ENCODE measurements at regions of chr18 and their contacts with region 1.

Region 1: GRCh38 chr18:47100214-47100831 is 50.0 kb downstream of the HDHD2 start:
- DNase-seq: peak; percentile 18 to 23
- ATAC-seq: peak in 7 of 8 donors; percentile 30 to 74 (median 69)
- H3K4me3 ChIP-seq: no peak overlapping the region
- H3K27ac ChIP-seq: no peak overlapping the region
- H3K4me1 ChIP-seq: peaks cover 0 to 5% (median 0%) of the 10 kb centered on the region in 9 donors
- H3K27me3 ChIP-seq: no peaks in the 10 kb centered on the region
- CTCF ChIP-seq: peak; percentile 57 to 85 (median 73)

Region 2: GRCh38 chr18:47204908-47205522 is 104.7 kb after region 1 on chr18:
- intact Hi-C with region 1: loop called (anchors 1 to 5 kb)
- DNase-seq: peak in 1 of 2 donors; percentile 15
- ATAC-seq: peak in 1 of 8 donors; percentile 47
- H3K4me3 ChIP-seq: no peak overlapping the region
- H3K27ac ChIP-seq: no peak overlapping the region
- H3K4me1 ChIP-seq: peaks cover 0 to 10% (median 0%) of the 10 kb centered on the region in 9 donors
- H3K27me3 ChIP-seq: peaks cover 0 to 30% (median 18%) of the 10 kb centered on the region in 7 donors
- CTCF ChIP-seq: peak; percentile 47 to 83 (median 76)

Region 3: DNA sequence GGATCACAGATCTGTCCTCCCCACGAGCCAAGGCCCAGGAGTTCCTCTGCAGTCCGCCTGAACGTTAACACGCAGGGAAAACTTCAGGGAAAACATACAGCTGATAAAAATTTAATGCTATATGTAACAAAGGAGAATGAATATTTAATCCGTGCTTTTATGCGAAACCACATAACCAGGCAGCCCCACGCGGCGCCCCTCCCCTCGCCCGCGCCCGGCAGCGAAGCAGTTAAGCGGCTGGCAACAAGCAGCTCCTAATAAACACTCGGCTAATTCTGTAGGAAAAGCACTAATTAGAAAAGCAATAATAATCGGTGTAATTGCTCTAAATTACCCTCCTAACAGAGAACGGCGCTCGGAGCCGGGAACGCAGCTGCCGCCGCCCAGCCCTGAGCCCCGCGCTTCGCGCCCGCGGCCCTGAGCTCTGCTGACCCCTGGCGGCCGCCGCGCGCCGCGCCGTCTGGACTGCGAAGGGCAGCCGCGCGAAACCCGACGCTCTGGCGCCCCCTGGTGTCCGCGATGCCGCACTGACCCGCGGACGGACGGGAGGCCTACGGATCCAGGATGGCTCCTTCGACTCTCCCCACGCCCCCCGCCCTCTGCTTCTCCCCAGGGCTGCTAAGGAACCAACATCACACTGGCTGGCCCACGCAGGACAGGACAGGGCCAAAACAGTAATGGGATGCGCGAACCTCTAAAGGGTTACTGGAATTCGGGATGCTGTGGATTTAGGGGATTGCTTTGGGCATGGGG is 648.7 kb after region 1 on chr18:
- intact Hi-C with region 1: loop called in 7 of 10 experiments (anchors 2 to 10 kb)
- DNase-seq: peak; percentile 63 to 83
- ATAC-seq: peak; percentile 90 to 96 (median 94)
- H3K4me3 ChIP-seq: peak overlapping the region in 7 of 10 donors; percentile 2 to 47 (median 35)
- H3K27ac ChIP-seq: no peak overlapping the region
- H3K4me1 ChIP-seq: peaks cover 0 to 5% (median 3%) of the 10 kb centered on the region in 9 donors
- H3K27me3 ChIP-seq: peaks cover 0 to 34% (median 16%) of the 10 kb centered on the region in 7 donors
- CTCF ChIP-seq: peak in 8 of 9 donors; percentile 99 to 100 (median 100)

Region 4: GRCh38 chr18:47756364-47757016 is 656.2 kb after region 1 on chr18:
- intact Hi-C with region 1: loop called in 4 of 10 experiments (anchors 10 kb)
- DNase-seq: peak; percentile 27 to 49
- ATAC-seq: peak in 7 of 8 donors; percentile 25 to 60 (median 47)
- H3K4me3 ChIP-seq: no peak overlapping the region
- H3K27ac ChIP-seq: no peak overlapping the region
- H3K4me1 ChIP-seq: no peaks in the 10 kb centered on the region
- H3K27me3 ChIP-seq: peaks cover 0 to 35% (median 17%) of the 10 kb centered on the region in 7 donors
- CTCF ChIP-seq: peak; percentile 70 to 88 (median 84)